ENCODE measurements at regions of chr14 and their contacts with region 1.

Region 1: DNA sequence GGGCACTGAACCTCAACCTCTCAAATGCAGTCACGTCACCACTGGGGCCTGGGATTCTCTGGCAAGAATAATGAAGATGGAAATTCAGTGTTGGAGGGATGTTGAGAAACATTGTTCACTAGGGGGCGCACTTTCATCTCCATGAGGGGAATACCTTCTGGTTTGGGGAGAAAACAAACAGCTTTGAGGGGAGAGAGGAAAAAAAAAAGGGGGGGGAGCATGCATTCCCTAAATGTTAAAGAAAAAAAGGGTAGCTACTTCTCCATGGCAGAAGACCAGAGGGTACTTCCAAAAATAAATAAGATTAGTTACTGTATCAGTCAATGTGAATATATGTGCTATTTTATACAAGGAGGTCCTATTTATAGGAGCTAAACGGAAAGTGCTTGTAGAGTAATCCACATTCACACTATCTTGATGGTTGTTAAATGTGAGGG is 5.8 kb upstream of the TBPL2 start:
- DNase-seq: peak; percentile 93
- H3K4me3 ChIP-seq: peak overlapping the region; percentile 23
- H3K27ac ChIP-seq: peak overlapping the region; percentile 21
- H3K4me1 ChIP-seq: peaks cover 26% of the 10 kb centered on the region
- H3K27me3 ChIP-seq: no peaks in the 10 kb centered on the region
- CTCF ChIP-seq: peak; percentile 81

Region 2: DNA sequence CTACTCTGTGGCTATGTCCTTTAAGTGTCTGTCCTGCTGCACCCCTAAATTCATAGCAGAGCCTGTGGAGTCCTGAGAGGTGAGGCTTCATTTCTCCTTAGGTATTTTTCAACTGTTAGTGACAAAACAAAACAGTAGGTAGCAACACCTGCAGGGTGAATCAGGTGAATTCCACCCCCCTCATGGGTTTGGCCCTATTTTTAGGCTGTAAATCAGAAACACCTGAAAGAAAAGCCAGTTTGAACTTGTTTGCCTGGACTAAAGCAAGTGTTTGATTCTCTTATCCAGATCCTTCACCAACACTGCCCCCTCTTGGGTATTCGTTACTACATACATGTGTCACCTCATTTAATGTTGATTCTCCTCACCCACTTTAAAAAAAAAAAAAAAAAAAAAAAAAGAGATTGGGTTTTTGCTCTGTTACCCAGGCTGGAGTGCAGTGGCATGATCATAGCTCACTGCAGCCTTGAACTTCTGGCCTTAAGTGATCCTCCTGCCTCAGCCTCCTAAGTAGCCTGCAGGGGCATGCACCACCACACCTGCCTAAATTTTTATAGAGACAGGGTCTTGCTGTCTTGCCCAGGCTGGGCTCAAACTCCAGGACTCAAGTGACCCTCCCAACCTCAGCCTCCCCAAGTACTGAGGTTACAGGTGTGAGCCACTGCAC is 16.1 kb before region 1 on chr14:
- CTCF ChIA-PET with region 1: interaction called, 12 read pairs
- POLR2A ChIA-PET with region 1: no interaction called
- intact Hi-C with region 1: no loop called
- DNase-seq: peak; percentile 72
- H3K4me3 ChIP-seq: no peak overlapping the region
- H3K27ac ChIP-seq: no peak overlapping the region
- H3K4me1 ChIP-seq: no peaks in the 10 kb centered on the region
- H3K27me3 ChIP-seq: no peaks in the 10 kb centered on the region
- CTCF ChIP-seq: peak; percentile 58

Region 3: GRCh38 chr14:55579724-55580469 is 133.7 kb after region 1 on chr14 and contains the start of gene KTN1:
- CTCF ChIA-PET with region 1: interaction called, 7 read pairs
- POLR2A ChIA-PET with region 1: no interaction called
- intact Hi-C with region 1: loop called (anchors 5 kb)
- DNase-seq: peak; percentile 89
- H3K4me3 ChIP-seq: peak within 1 kb of the TSS; percentile 92
- H3K27ac ChIP-seq: peak within 1 kb of the TSS; percentile 92
- H3K4me1 ChIP-seq: peaks cover 43% of the 10 kb centered on the region
- H3K27me3 ChIP-seq: no peaks in the 10 kb centered on the region
- CTCF ChIP-seq: no peak
- total RNA-seq, gene KTN1: 170 and 199 TPM in 2 replicates

Region 4: DNA sequence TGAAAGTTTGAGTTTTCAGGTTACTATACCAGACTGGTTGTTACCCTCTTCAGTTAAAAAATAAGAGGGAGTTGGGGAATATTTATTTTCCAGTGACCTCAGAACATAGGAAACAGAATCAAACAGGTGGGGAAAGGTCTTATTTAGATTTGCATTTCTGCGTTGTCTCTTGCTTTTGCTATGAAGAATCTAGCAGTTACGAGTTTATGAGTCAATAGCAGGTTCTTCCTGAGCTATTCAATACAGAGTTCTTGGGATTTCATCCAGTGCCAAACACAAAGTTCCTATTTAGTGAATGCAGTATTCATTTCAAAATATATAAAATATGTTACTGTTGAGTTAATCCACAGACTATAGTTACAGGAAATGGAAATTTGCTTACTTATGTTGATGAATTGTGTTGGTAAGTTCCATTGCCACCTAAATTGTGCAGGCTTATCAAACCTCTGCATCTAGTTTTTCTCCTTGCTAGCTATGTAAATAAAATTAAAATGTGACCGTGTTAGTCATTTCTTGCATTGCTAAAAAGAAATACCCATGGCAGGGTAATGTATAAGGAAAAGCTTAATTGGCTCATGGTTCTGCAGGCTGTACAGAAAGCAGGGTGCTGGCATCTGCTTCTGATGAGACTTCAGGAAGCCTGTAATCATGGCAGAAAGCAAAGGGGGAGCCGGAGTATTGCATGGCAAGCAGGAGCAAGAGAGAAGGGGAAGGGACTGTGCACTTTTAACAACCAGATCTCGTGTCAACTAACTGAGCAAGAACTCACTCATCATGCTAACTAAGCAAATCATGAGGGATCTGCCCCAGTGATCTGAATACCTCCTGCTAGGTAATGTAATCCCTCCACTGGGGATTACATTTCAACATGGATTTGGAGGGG is 244.0 kb after region 1 on chr14:
- CTCF ChIA-PET with region 1: no interaction called
- POLR2A ChIA-PET with region 1: no interaction called
- intact Hi-C with region 1: loop called (anchors 5 kb)
- DNase-seq: peak; percentile 60
- H3K4me3 ChIP-seq: no peak overlapping the region
- H3K27ac ChIP-seq: peak overlapping the region; percentile 65
- H3K4me1 ChIP-seq: peaks cover 25% of the 10 kb centered on the region
- H3K27me3 ChIP-seq: no peaks in the 10 kb centered on the region
- CTCF ChIP-seq: no peak